Heart right ventricle (tissue), 16 donors: ENCODE measurements at regions of chr10 and their contacts with region 1.

Region 1: GRCh38 chr10:21943633-21944265 is 59.8 kb downstream of the DNAJC1 start:
- DNase-seq: no peak
- ATAC-seq: peak in 1 of 8 donors; percentile 17
- H3K4me3 ChIP-seq: no peak overlapping the region
- H3K27ac ChIP-seq: no peak overlapping the region
- H3K4me1 ChIP-seq: peaks cover 0 to 29% (median 19%) of the 10 kb centered on the region in 9 donors
- H3K27me3 ChIP-seq: no peaks in the 10 kb centered on the region
- CTCF ChIP-seq: no peak

Region 2: DNA sequence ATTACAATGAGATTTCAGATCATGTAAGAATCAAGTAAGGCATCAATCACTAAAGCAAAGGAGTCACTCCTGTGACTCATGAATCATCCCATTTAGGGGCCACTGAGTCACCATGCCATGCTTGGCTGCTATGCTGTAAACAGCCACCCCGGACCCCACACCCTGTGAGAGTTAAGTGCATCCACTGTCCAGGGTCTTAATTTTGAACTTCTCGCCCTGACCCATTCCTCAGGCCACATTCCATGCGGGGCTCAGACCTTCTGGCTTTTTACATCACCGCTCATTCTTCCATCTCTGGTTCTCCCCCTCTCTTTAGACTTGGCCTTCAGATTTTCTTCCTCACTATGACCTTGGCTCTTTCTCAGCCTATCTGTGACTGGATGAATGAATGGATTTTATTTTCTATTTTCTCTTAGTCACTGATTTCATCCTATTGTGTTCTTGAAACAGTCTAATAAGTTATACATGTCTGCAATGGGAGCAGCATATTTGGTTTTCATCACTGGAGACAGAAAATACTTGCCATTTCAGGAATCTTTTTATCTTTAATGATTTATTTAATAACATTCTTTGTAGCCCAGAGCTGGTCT is 657.9 kb before region 1 on chr10:
- intact Hi-C with region 1: loop called in 1 of 10 experiments (anchors 10 kb)
- DNase-seq: no peak
- ATAC-seq: no peak
- H3K4me3 ChIP-seq: no peak overlapping the region
- H3K27ac ChIP-seq: no peak overlapping the region
- H3K4me1 ChIP-seq: no peaks in the 10 kb centered on the region
- H3K27me3 ChIP-seq: no peaks in the 10 kb centered on the region
- CTCF ChIP-seq: no peak

Region 3: GRCh38 chr10:22193945-22194344 is 250.2 kb after region 1 on chr10:
- intact Hi-C with region 1: no loop called
- DNase-seq: no peak
- ATAC-seq: no peak
- H3K4me3 ChIP-seq: no peak overlapping the region
- H3K27ac ChIP-seq: no peak overlapping the region
- H3K4me1 ChIP-seq: no peaks in the 10 kb centered on the region
- H3K27me3 ChIP-seq: peaks cover 0 to 14% (median 0%) of the 10 kb centered on the region in 7 donors
- CTCF ChIP-seq: no peak